ENCODE measurements at regions of chr6 and their contacts with region 1.

Region 1: DNA sequence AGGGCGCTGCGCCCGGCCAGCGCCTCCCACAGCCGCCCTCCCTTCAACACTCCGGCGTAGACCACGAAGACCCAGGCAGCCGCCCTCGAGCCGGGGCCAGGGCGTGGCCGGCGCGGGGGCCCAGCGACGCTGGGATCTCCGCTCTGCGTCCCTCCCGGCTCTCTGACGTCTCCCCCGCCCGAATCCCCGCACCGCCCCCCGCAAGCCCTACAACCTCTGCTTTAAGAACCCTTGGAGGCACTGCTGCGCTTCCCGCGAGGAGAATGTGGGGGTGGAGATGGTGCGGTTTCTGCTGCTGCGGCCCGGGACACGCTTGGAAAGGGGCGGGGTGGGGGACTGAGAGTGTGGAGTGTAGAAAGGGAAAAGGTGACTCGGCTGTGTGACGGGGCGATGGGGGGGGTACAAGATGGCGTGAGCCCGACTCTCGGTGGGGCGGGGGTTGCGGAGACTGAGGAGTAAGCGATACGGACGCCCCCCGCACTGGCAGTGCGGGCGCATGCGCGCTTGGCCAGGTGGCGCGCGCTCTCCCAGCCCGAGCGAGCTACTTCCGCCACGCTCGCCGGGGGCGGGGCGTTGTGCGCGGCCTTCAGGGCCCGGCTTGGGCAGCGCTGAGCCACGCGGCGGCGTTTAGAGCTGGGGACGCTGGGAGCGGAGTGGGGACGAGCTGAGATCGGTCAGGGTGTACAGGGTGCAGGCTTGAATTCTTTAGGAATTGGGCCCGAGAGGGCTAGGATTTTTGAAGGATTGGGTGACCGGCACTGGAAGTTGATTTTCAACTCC is at the start of gene SUPT3H:
- DNase-seq: peak; percentile 87 to 96 (median 89)
- ATAC-seq: peak; percentile 90
- H3K4me3 ChIP-seq: peak within 1 kb of the TSS; percentile 75
- H3K4me3 Mint-ChIP-seq: peak within 1 kb of the TSS; percentile 89 to 100 (median 98)
- H3K27ac ChIP-seq: peak within 1 kb of the TSS; percentile 86
- H3K27ac Mint-ChIP-seq: peak within 1 kb of the TSS; percentile 96 to 100 (median 98)
- H3K4me1 ChIP-seq: peaks cover 0 to 14% of the 10 kb centered on the region in 2 donors
- H3K4me1 Mint-ChIP-seq: peaks cover 14 to 35% (median 28%) of the 10 kb centered on the region in 7 donors
- H3K27me3 ChIP-seq: no peaks in the 10 kb centered on the region
- H3K27me3 Mint-ChIP-seq: no peaks in the 10 kb centered on the region
- total RNA-seq, gene SUPT3H: 10.0 to 16.0 (median 12.7) TPM

Region 2: DNA sequence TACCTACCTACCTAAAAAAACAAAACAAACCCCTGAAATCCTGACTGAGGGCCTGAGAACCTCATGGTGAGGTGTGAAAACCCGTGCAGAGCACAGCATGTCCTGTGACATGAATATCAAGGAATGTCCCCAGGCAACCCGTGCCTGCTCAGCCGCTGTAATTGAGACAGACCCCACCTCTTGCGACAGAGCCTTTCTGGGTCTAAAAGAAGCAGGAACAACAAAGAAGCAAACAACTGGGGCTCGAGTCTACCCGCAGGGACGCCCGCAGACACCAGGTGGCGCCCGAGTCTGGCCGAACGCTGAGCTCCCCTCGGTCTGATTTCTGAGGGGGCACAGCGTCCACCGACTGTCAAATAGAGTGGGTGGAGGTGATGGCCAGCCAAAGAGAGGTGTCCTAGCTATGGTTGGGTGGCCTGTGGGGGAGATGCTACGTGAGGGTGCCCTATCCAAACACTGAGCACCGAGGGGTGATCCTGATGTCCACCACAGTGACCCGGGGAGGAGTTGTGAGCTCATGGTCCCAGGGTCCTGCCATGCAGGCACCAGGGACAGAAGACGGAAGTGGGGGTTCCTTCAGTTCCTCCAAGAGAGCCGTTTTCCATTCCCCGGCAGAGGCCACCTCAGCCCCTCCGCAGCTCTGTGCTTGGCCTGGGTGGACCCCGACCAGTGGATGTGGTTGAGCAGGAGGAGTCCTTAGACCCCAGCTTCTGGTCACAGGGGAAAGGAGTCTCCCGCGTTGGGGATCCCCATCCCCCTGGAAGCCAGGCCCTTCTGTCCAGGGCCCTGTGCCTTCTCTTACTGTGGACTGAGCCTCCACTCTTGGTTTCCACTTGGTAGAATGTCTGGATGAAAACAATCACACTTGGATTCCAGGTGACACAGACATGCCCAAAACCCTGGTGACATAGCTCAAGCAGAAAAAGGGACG is 722.1 kb before region 1 on chr6:
- CTCF ChIA-PET with region 1: interaction called, 5 read pairs
- POLR2A ChIA-PET with region 1: no interaction called
- intact Hi-C with region 1: loop called in 1 of 2 experiments (anchors 1 kb)
- DNase-seq: peak; percentile 33 to 79 (median 65)
- ATAC-seq: peak; percentile 84
- H3K4me3 ChIP-seq: no peak overlapping the region
- H3K4me3 Mint-ChIP-seq: peak overlapping the region in 8 of 10 donors; percentile 26 to 72 (median 64)
- H3K27ac ChIP-seq: no peak overlapping the region
- H3K27ac Mint-ChIP-seq: peak overlapping the region; percentile 37 to 96 (median 79)
- H3K4me1 ChIP-seq: peaks cover 0 to 9% of the 10 kb centered on the region in 2 donors
- H3K4me1 Mint-ChIP-seq: peaks cover 6 to 16% (median 10%) of the 10 kb centered on the region in 7 donors
- H3K27me3 ChIP-seq: no peaks in the 10 kb centered on the region
- H3K27me3 Mint-ChIP-seq: peaks cover 0 to 12% (median 2%) of the 10 kb centered on the region in 5 donors

Region 3: GRCh38 chr6:45001663-45002062 is 376.1 kb before region 1 on chr6:
- CTCF ChIA-PET with region 1: no interaction called
- POLR2A ChIA-PET with region 1: no interaction called
- intact Hi-C with region 1: loop called in 1 of 2 experiments (anchors 10 kb)
- DNase-seq: peak in 3 of 9 donors; percentile 19 to 22 (median 21)
- ATAC-seq: peak; percentile 74
- H3K4me3 ChIP-seq: no peak overlapping the region
- H3K4me3 Mint-ChIP-seq: peak overlapping the region in 5 of 10 donors; percentile 8 to 49 (median 13)
- H3K27ac ChIP-seq: peak overlapping the region; percentile 2
- H3K27ac Mint-ChIP-seq: peak overlapping the region in 7 of 9 donors; percentile 14 to 87 (median 59)
- H3K4me1 ChIP-seq: peaks cover 4 to 7% of the 10 kb centered on the region in 2 donors
- H3K4me1 Mint-ChIP-seq: peaks cover 7 to 36% (median 26%) of the 10 kb centered on the region in 7 donors
- H3K27me3 ChIP-seq: no peaks in the 10 kb centered on the region
- H3K27me3 Mint-ChIP-seq: no peaks in the 10 kb centered on the region

Region 4: GRCh38 chr6:45163952-45164766 is 213.6 kb before region 1 on chr6:
- CTCF ChIA-PET with region 1: no interaction called
- POLR2A ChIA-PET with region 1: no interaction called
- intact Hi-C with region 1: loop called (anchors 2 to 5 kb)
- DNase-seq: peak in 2 of 9 donors; percentile 11 to 42
- ATAC-seq: no peak
- H3K4me3 ChIP-seq: no peak overlapping the region
- H3K4me3 Mint-ChIP-seq: peak overlapping the region in 1 of 10 donors; percentile 48
- H3K27ac ChIP-seq: no peak overlapping the region
- H3K27ac Mint-ChIP-seq: peak overlapping the region in 3 of 9 donors; percentile 36 to 75 (median 42)
- H3K4me1 ChIP-seq: no peaks in the 10 kb centered on the region
- H3K4me1 Mint-ChIP-seq: peaks cover 0 to 29% (median 6%) of the 10 kb centered on the region in 7 donors
- H3K27me3 ChIP-seq: no peaks in the 10 kb centered on the region
- H3K27me3 Mint-ChIP-seq: no peaks in the 10 kb centered on the region

Region 5: GRCh38 chr6:45350186-45350710 is 27.5 kb before region 1 on chr6:
- CTCF ChIA-PET with region 1: no interaction called
- POLR2A ChIA-PET with region 1: no interaction called
- intact Hi-C with region 1: no loop called
- DNase-seq: no peak
- ATAC-seq: no peak
- H3K4me3 ChIP-seq: no peak overlapping the region
- H3K4me3 Mint-ChIP-seq: no peak overlapping the region
- H3K27ac ChIP-seq: no peak overlapping the region
- H3K27ac Mint-ChIP-seq: no peak overlapping the region
- H3K4me1 ChIP-seq: no peaks in the 10 kb centered on the region
- H3K4me1 Mint-ChIP-seq: peaks cover 3 to 20% (median 12%) of the 10 kb centered on the region in 7 donors
- H3K27me3 ChIP-seq: no peaks in the 10 kb centered on the region
- H3K27me3 Mint-ChIP-seq: no peaks in the 10 kb centered on the region

Region 6: DNA sequence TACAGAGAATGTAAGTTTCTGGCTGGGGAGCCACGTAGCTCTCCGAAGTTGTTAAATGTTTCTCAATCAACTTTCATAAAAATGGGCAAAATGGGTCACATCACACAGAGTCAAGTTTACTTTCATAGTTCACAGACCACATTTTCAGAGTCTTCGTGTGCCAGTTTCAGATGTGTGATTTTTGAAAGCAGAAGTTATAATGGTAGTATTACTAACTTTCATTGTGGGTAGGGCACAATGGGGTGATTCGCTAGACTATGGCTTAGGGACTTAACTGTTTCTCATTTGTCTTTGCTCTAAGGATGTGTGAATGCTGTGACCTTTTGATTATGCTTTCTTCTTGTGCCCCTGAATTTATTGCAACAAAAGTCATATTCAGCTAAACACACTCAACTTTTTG is 109.0 kb after region 1 on chr6:
- CTCF ChIA-PET with region 1: no interaction called
- POLR2A ChIA-PET with region 1: no interaction called
- intact Hi-C with region 1: loop called in 1 of 2 experiments (anchors 5 kb)
- DNase-seq: no peak
- ATAC-seq: peak; percentile 45
- H3K4me3 ChIP-seq: no peak overlapping the region
- H3K4me3 Mint-ChIP-seq: no peak overlapping the region
- H3K27ac ChIP-seq: no peak overlapping the region
- H3K27ac Mint-ChIP-seq: no peak overlapping the region
- H3K4me1 ChIP-seq: peaks cover 17 to 20% of the 10 kb centered on the region in 2 donors
- H3K4me1 Mint-ChIP-seq: peaks cover 21 to 38% (median 31%) of the 10 kb centered on the region in 7 donors
- H3K27me3 ChIP-seq: no peaks in the 10 kb centered on the region
- H3K27me3 Mint-ChIP-seq: peaks cover 0 to 4% (median 0%) of the 10 kb centered on the region in 5 donors

Region 7: DNA sequence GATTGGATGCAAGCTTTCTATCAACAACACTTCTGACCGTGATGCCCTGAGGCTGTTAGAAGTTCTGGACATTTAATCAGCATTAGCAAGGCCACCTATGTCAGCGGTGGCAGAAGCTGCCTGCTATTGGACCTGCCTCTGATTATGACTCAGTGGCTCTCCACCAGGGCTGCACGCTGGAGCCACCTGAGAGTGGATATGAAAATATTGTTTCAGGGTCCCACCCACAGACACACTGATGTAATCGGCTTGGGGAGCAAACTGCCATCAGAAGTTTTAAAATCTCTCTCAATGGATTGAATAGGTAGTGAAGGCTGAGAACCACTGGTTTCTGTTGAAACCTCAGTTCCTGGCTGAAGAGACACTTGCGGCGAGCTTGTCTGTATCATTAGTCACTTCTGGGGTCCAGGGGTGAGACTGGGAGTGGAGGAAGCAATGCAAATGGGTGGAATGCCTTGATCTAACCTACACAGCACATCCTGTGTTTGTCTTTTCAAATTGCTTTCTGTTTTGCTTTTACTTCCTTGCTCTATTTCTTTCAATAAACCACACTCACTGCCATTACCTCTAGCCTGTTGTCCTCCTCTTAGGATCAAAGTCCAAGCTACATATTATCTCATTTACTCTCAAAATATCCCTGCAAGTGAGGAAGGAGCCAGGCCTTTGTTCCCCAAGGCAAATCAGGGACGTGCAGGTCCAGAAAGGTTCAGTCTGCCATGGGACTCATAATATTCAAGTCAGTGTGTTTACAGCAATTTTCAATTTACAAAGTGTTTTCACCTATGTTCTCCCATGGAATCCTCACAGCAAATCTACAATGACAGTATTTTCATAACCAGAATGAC is 633.7 kb after region 1 on chr6:
- CTCF ChIA-PET with region 1: no interaction called
- POLR2A ChIA-PET with region 1: no interaction called
- intact Hi-C with region 1: loop called in 1 of 2 experiments (anchors 5 kb)
- DNase-seq: peak in 8 of 9 donors; percentile 35 to 69 (median 58)
- ATAC-seq: peak; percentile 88
- H3K4me3 ChIP-seq: peak overlapping the region; percentile 45
- H3K4me3 Mint-ChIP-seq: peak overlapping the region; percentile 68 to 82 (median 78)
- H3K27ac ChIP-seq: peak overlapping the region; percentile 64
- H3K27ac Mint-ChIP-seq: peak overlapping the region; percentile 85 to 98 (median 92)
- H3K4me1 ChIP-seq: peaks cover 37 to 43% of the 10 kb centered on the region in 2 donors
- H3K4me1 Mint-ChIP-seq: peaks cover 37 to 62% (median 60%) of the 10 kb centered on the region in 7 donors
- H3K27me3 ChIP-seq: no peaks in the 10 kb centered on the region
- H3K27me3 Mint-ChIP-seq: peaks cover 0 to 14% (median 1%) of the 10 kb centered on the region in 5 donors

Measured in naive thymus-derived CD4-positive, alpha-beta T cell (primary cell).